ENCODE measurements at regions of chr6 and their contacts with region 1.

Region 1: DNA sequence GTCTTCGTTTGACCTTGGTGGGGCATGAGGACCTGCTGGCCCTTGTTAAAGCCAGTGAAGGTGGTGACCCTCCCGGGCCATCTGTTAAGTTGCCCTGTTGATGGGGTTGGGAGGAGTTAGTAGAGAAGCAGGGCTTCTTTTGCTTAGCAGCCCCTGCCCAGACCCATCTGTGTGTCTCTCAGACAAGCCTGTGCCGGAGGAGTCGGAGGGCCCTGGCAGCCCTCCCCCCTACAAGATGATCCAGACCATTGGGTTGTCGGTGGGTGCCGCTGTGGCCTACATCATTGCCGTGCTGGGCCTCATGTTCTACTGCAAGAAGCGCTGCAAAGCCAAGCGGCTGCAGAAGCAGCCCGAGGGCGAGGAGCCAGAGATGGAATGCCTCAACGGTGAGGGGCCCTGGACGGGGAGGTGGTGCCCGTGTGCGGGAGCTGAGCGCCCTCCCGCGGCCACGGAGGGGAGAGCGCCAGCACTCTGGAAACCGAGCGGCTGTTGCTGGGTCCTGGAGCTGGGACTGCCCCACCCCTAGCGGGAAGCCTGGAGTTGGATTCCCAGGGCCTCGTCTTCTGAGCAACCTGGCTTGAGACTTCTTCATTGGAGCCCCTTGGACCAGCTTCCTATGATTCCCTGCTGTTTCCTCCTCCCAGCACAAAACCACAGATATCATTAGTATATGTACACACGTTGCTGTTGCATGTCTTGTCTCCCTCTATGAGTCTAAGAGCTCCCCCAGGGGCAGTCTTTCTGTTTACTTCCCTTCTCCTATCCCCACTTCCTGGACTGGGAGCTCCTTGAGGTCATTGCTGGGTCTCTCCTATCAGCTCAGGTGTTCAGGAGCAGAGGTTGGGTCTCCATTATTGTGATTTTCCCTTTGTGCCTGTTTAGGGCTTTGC is 27.6 kb upstream of the SRF start:
- DNase-seq: peak; percentile 80
- H3K4me3 Mint-ChIP-seq: no peak overlapping the region
- H3K27ac Mint-ChIP-seq: no peak overlapping the region
- H3K4me1 Mint-ChIP-seq: peaks cover 18% of the 10 kb centered on the region
- H3K27me3 Mint-ChIP-seq: no peaks in the 10 kb centered on the region
- CTCF ChIP-seq: peak; percentile 94

Region 2: DNA sequence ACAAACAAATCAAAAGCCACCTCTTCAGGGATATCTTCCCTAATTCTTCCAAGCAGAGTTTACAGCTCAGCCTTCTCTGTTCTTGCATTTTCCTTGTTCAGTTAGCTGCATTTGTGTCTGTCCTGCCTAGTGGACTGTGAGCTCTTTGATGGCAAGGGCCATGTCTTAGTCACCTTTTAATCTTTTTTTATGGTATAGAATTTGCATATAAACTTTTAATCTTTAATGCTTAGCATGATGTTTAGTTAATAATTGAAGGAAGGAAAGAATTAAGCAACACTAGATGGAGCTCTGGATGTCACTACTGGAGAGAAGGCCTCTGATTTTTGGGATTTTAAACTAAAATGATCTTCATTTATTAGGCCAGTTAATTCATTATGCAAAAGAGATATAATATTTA is 147.0 kb before region 1 on chr6:
- CTCF ChIA-PET with region 1: interaction called, 10 read pairs
- POLR2A ChIA-PET with region 1: interaction called, 3 read pairs
- intact Hi-C with region 1: no loop called
- DNase-seq: no peak
- H3K4me3 Mint-ChIP-seq: no peak overlapping the region
- H3K27ac Mint-ChIP-seq: no peak overlapping the region
- H3K4me1 Mint-ChIP-seq: no peaks in the 10 kb centered on the region
- H3K27me3 Mint-ChIP-seq: no peaks in the 10 kb centered on the region
- CTCF ChIP-seq: no peak

Region 3: GRCh38 chr6:43070028-43070632 is 73.3 kb before region 1 on chr6:
- CTCF ChIA-PET with region 1: interaction called, 18 read pairs
- POLR2A ChIA-PET with region 1: interaction called, 17 read pairs
- intact Hi-C with region 1: loop called (anchors 1 kb)
- DNase-seq: peak; percentile 65
- H3K4me3 Mint-ChIP-seq: no peak overlapping the region
- H3K27ac Mint-ChIP-seq: peak overlapping the region; percentile 75
- H3K4me1 Mint-ChIP-seq: no peaks in the 10 kb centered on the region
- H3K27me3 Mint-ChIP-seq: no peaks in the 10 kb centered on the region
- CTCF ChIP-seq: peak; percentile 62

Region 4: DNA sequence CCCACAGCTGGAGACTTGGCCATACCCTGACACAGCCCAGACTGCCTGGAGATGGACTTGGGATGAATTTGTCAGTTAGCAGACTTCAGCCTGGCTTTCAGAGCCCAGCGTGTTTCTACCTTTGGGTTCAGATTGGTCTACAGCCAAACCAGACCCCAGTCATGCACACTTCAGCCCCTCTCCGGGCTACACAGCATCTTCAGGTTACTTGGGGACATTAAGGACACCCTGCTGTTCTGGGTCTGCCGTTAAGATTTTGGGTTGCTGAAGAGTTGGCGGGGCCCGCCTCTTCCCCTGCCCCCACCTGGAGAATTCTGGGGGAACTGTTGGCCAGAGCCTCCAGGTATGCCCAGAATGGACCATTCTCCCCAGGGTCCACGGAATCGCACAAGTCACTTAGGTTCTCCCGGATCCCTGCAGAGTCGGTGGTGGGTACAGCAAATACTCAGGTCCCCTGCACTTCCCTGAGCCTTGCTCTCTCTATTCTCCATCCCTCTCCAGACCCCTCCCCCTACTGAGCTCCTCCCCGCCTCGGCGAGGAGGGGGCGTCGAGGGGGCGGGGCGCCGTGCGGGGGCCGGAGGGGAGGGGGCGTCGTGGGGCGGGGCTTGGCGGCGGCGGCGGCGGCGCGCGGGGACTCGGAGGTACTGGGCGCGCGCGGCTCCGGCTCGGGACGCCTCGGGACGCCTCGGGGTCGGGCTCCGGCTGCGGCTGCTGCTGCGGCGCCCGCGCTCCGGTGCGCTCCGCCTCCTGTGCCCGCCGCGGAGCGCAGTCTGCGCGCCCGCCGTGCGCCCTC is 67.6 kb before region 1 on chr6 and contains the start of gene PTK7:
- CTCF ChIA-PET with region 1: interaction called, 23 read pairs
- POLR2A ChIA-PET with region 1: interaction called, 17 read pairs
- intact Hi-C with region 1: no loop called
- DNase-seq: peak; percentile 47
- H3K4me3 Mint-ChIP-seq: peak within 1 kb of the TSS; percentile 81
- H3K27ac Mint-ChIP-seq: peak within 1 kb of the TSS; percentile 61
- H3K4me1 Mint-ChIP-seq: peaks cover 14% of the 10 kb centered on the region
- H3K27me3 Mint-ChIP-seq: no peaks in the 10 kb centered on the region
- CTCF ChIP-seq: no peak
- total RNA-seq, gene PTK7: 42.6 and 48.4 TPM in 2 replicates

Region 5: DNA sequence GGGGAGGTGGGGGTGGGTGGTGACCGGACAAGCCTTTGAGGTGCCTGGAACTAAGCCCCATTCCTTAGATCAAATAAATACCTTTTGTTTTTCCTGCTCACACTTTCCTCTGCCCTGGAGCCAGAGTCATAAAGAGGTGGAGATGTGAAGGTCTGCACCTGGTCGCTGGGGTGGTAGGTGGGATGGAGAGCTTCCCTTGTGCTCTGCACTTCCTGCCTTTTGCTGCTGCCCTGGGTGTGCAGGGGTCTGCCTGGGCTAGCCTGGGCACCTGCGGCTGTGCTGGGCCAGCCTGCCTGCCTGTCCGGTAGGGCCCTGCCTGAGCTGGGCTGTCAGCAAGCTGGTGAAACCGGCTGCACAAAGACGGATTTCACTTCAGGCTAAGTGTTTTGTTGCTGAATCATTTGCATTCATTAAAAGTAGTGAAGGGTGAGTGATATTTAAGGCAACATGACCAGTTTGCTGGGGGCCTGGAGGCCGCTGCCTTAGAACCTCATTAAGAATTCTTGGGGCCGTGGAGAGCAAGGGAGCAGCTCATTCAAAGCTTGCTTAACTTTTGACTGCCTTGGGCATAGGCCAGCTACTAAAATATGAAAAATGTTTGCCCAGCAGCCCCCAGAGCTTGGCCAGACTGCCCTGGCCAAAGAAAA is 46.9 kb before region 1 on chr6:
- CTCF ChIA-PET with region 1: interaction called, 9 read pairs
- POLR2A ChIA-PET with region 1: interaction called, 14 read pairs
- intact Hi-C with region 1: no loop called
- DNase-seq: peak; percentile 83
- H3K4me3 Mint-ChIP-seq: peak overlapping the region; percentile 55
- H3K27ac Mint-ChIP-seq: peak overlapping the region; percentile 92
- H3K4me1 Mint-ChIP-seq: peaks cover 31% of the 10 kb centered on the region
- H3K27me3 Mint-ChIP-seq: no peaks in the 10 kb centered on the region
- CTCF ChIP-seq: no peak

Region 6: DNA sequence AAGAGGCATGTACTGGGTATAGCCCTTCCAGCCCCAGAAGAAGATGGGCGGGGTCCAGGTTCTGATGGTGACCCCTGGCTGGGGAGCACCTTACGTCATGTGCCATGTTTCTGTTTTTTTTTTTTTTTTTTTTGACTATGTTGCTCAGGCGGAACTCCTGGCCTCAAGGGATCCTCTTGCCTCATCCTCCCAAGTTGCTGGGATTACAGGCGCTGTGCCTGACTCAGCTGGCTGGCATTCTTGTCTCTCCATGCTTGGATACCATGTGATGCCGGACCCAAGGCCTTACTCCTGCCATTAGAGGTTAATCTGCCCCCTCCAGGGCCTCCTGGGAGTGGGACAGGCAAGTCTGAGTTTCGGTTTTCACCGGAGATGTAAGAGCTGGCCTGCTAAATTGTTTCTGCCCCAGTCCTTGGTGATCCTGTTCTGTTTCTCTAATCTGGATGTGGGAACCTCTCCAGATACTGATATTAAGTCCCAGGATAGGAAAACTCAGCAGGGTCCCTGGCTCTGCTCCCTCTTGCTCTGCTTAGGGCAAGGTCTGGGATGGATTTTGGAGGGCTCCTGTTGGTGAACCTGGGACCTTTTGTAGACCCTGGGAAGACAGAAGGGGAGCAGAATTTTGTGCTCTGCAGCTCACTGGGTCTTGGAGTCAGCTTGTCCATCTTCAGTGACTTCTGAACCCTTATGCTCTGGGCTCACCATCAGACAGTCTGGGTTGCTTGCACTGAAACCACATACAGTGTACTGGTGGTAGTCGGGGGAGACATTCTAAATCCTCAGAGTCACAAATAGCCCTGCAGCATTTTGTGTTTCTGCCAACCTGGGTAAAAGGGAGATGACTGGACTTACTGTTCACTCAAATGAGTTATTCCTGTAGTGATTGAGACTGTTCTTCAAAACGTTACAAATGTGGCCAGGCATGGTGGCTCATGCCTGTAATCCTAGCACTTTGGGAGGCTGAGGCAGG is 22.3 kb before region 1 on chr6:
- CTCF ChIA-PET with region 1: interaction called, 11 read pairs
- POLR2A ChIA-PET with region 1: interaction called, 6 read pairs
- intact Hi-C with region 1: no loop called
- DNase-seq: peak; percentile 97
- H3K4me3 Mint-ChIP-seq: no peak overlapping the region
- H3K27ac Mint-ChIP-seq: peak overlapping the region; percentile 73
- H3K4me1 Mint-ChIP-seq: peaks cover 36% of the 10 kb centered on the region
- H3K27me3 Mint-ChIP-seq: no peaks in the 10 kb centered on the region
- CTCF ChIP-seq: no peak

Region 7: DNA sequence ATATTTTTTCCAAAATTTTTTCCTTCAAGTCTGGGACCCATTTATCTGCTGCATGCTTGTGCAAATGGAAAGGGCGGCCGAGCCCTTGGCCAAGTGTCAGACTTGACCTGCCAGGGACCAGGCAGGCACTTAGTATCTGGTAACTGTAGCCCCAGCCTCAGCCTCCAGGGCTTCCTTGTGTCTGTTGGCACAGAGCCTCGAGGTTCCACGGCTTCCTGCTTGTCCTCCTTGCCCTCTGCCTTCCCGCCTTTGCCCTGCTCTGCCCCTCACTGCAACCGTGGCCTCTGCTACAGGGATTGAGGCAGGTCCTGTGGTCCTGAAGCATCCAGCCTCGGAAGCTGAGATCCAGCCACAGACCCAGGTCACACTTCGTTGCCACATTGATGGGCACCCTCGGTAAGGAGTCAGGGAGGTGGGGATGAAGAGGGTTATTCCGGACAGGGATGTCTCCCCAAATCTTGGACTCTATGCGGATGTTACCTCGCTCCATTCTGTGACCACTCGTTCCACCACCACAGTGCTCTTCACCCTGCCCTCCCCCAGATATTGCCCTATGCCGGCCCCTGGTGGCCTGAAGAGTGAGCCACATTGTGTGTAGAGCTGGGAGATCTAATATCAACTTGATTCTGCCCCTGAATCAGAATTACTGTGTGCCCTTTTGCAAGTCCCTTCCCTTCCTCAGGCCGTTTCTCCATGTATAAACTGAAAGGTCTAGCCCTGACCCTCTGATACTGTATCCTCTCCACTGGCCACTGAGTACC is 13.9 kb before region 1 on chr6:
- CTCF ChIA-PET with region 1: interaction called, 18 read pairs
- POLR2A ChIA-PET with region 1: interaction called, 3 read pairs
- intact Hi-C with region 1: no loop called
- DNase-seq: peak; percentile 65
- H3K4me3 Mint-ChIP-seq: no peak overlapping the region
- H3K27ac Mint-ChIP-seq: peak overlapping the region; percentile 57
- H3K4me1 Mint-ChIP-seq: peaks cover 24% of the 10 kb centered on the region
- H3K27me3 Mint-ChIP-seq: no peaks in the 10 kb centered on the region
- CTCF ChIP-seq: peak; percentile 68

Measured in MCF 10A (cell line).